GM12878 (cell line): ENCODE measurements at regions of chr2 and their contacts with region 1.

Region 1: GRCh38 chr2:136384531-136385303 is 266.8 kb upstream of the CXCR4 start:
- DNase-seq: no peak
- ATAC-seq: peak; percentile 68
- H3K4me3 ChIP-seq: no peak overlapping the region
- H3K27ac ChIP-seq: no peak overlapping the region
- H3K4me1 ChIP-seq: peaks cover 21% of the 10 kb centered on the region
- H3K27me3 ChIP-seq: no peaks in the 10 kb centered on the region
- CTCF ChIP-seq: peak; percentile 83 to 92 (median 87)
- EP300 ChIP-seq: peak; percentile 28 to 37; a peak in 1 of 4 replicates
- POLR2A ChIP-seq: no peak
- RAD21 ChIP-seq: peak; percentile 91

Region 2: GRCh38 chr2:135741395-135742324 is 643.1 kb before region 1 on chr2 and contains the start of gene UBXN4:
- CTCF ChIA-PET with region 1: interaction called, 15 read pairs
- POLR2A ChIA-PET with region 1: no interaction called
- RAD21 ChIA-PET with region 1: interaction called, 3 read pairs
- SMC1A ChIA-PET with region 1: interaction called, 6 read pairs
- in situ Hi-C with region 1: no loop called
- intact Hi-C with region 1: no loop called
- DNase-seq: peak; percentile 96
- ATAC-seq: peak; percentile 91
- H3K4me3 ChIP-seq: peak within 1 kb of the TSS; percentile 95
- H3K27ac ChIP-seq: peak within 1 kb of the TSS; percentile 74
- H3K4me1 ChIP-seq: 0 out of 2 replicates have a peak, but pooled peaks cover 5% of the 10 kb centered on the region
- H3K27me3 ChIP-seq: no peaks in the 10 kb centered on the region
- CTCF ChIP-seq: peak; percentile 49 to 66 (median 50); a peak in 5 of 6 replicates
- EP300 ChIP-seq: no peak
- POLR2A ChIP-seq: peak; percentile 97
- RAD21 ChIP-seq: no peak
- polyA plus RNA-seq, gene UBXN4: 52.6 to 79.4 TPM

Region 3: GRCh38 chr2:135913727-135914365 is 470.9 kb before region 1 on chr2:
- CTCF ChIA-PET with region 1: interaction called, 378 read pairs
- POLR2A ChIA-PET with region 1: interaction called, 7 read pairs
- RAD21 ChIA-PET with region 1: interaction called, 254 read pairs
- SMC1A ChIA-PET with region 1: interaction called, 348 read pairs
- in situ Hi-C with region 1: loop called (anchors 5 kb)
- intact Hi-C with region 1: loop called (anchors 1 kb)
- DNase-seq: no peak
- ATAC-seq: peak; percentile 75
- H3K4me3 ChIP-seq: no peak overlapping the region
- H3K27ac ChIP-seq: no peak overlapping the region
- H3K4me1 ChIP-seq: no peaks in the 10 kb centered on the region
- H3K27me3 ChIP-seq: no peaks in the 10 kb centered on the region
- CTCF ChIP-seq: peak; percentile 58 to 68 (median 63); a peak in 5 of 6 replicates
- EP300 ChIP-seq: no peak
- POLR2A ChIP-seq: no peak
- RAD21 ChIP-seq: peak; percentile 75

Region 4: DNA sequence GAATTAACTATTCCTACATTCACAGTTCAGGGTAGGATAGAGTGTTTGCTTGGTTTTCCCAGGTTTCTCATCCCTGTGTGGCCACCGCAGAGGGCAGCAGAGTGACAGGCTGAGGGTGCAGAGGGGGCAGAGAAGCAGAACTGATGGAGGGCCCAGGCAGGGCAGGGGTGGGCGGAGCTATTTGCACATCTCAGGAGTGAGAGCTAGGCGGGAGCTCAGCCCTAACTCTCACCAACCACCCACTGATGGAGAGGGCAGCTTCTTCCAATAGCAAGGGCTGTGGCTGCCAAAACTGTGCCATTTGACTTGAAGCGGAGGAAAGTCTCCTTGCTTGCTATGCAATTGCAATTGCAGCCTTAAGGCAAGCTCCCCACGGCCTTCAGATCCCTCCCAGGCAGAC is 387.3 kb before region 1 on chr2:
- CTCF ChIA-PET with region 1: interaction called, 39 read pairs
- POLR2A ChIA-PET with region 1: no interaction called
- RAD21 ChIA-PET with region 1: interaction called, 14 read pairs
- SMC1A ChIA-PET with region 1: interaction called, 17 read pairs
- in situ Hi-C with region 1: no loop called
- intact Hi-C with region 1: no loop called
- DNase-seq: no peak
- ATAC-seq: peak; percentile 82
- H3K4me3 ChIP-seq: no peak overlapping the region
- H3K27ac ChIP-seq: no peak overlapping the region
- H3K4me1 ChIP-seq: peaks cover 11% of the 10 kb centered on the region
- H3K27me3 ChIP-seq: no peaks in the 10 kb centered on the region
- CTCF ChIP-seq: peak; percentile 5 to 27 (median 7); a peak in 3 of 6 replicates
- EP300 ChIP-seq: no peak
- POLR2A ChIP-seq: no peak
- RAD21 ChIP-seq: peak; percentile 61

Region 5: DNA sequence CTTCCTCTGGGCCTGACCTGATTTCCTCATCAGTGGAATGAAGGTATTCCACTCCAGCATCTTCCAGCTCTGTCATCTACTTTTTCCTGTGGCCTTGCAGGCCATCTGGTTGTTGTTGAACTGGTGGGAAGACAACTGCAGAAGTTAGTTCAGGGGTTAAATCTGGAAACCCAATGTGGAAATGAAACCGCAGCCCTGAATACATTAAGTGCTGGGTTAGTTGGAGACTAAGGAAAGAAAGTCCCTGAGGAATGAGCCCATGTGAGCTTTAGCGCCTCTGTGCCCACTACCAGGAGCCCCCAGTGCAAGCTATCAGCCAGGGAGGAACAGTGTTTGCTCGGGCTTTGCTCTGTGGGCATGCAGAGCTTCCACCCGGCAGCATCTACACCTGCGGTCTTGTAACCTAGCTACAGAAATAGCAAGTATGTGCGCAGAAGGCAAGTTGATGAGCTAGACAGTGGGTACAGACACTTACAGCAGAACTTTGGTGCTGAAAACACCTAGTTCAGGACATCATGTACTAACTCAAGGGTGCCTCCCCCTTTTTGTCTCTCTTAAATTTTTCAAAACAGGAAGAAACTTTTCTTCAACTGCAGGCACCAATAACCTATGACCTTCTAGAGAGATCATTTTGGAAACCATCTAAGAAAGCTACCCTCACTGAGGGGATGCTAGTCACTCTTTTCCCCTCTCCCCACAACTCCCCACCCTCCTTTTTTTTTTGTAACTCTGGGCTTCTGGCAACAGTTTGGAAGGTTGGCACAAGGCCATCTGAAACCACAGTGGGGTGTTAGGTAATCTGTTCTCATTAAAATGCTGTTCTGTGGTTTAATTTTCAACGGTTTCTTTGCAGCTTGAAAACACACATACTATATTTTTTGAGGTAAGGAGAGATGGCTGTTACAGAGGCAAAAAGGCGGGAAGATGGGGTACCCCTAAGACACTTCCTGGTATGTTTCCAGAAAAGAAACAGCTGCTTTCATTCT is 248.5 kb before region 1 on chr2:
- CTCF ChIA-PET with region 1: interaction called, 10 read pairs
- POLR2A ChIA-PET with region 1: no interaction called
- RAD21 ChIA-PET with region 1: interaction called, 148 read pairs
- SMC1A ChIA-PET with region 1: interaction called, 81 read pairs
- in situ Hi-C with region 1: loop called (anchors 5 kb)
- intact Hi-C with region 1: loop called (anchors 1 kb)
- DNase-seq: no peak
- ATAC-seq: peak; percentile 64
- H3K4me3 ChIP-seq: no peak overlapping the region
- H3K27ac ChIP-seq: no peak overlapping the region
- H3K4me1 ChIP-seq: peaks cover 42% of the 10 kb centered on the region
- H3K27me3 ChIP-seq: peaks cover 0 to 21% of the 10 kb centered on the region in 2 experiments; a peak in 2 of 4 replicates
- CTCF ChIP-seq: no peak
- EP300 ChIP-seq: peak; percentile 97; a peak in 3 of 4 replicates
- POLR2A ChIP-seq: no peak
- RAD21 ChIP-seq: no peak

Region 6: GRCh38 chr2:136281281-136282114 is 103.2 kb before region 1 on chr2:
- CTCF ChIA-PET with region 1: interaction called, 4 read pairs
- POLR2A ChIA-PET with region 1: no interaction called
- RAD21 ChIA-PET with region 1: interaction called, 11 read pairs
- SMC1A ChIA-PET with region 1: interaction called, 5 read pairs
- in situ Hi-C with region 1: no loop called
- intact Hi-C with region 1: no loop called
- DNase-seq: peak; percentile 25
- ATAC-seq: peak; percentile 85
- H3K4me3 ChIP-seq: no peak overlapping the region
- H3K27ac ChIP-seq: no peak overlapping the region
- H3K4me1 ChIP-seq: peaks cover 22% of the 10 kb centered on the region
- H3K27me3 ChIP-seq: no peaks in the 10 kb centered on the region; a peak in 1 of 4 replicates
- CTCF ChIP-seq: no peak
- EP300 ChIP-seq: no peak
- POLR2A ChIP-seq: no peak
- RAD21 ChIP-seq: no peak